OCI-LY7 (cell line): ENCODE measurements at regions of chr12 and their contacts with region 1.

Region 1: DNA sequence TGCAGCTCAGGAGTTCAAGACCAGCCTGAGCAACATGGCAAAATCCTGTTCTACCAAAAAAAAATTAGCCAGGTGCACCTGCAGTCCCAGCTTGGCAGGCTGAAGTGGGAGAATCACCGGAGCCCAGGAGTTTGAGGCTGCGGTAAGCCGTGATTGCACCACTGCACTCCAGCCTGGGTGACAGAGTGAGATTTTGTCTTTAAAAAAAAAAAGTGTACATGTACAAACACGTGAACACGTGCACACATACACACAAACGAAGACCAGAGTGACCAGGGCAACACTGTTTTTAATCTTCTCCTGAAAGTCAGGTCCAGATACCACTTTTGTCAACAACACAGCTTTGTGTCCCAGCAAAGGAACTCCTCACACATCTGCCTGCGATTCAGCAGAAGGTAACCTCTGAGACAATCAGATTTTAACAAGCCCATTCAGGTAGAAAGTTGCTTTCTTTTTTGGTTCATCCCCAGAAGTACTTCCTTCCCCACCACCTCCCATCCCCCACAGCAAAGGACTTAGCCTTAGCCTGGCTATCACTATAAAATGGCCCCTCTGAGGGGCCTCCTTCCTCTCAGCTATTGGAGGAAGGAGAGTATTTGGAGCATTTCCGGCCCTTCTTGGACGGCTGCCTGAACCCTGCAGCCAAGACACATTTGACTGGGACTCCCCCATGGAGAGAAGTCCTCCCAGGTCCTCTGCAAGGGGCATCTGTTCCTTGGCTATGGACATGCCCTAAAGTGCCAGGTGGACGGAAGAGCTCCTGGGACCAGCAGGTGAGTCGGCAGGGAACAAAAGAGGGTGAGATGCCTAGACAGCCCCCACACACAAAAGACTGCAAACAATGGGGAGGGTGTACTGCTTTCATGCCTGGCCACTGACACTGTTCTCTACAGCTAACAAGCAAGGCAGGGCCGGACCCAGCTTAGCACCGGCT is 9.8 kb downstream of the CTDSP2 start:
- DNase-seq: peak; percentile 83
- H3K4me3 ChIP-seq: peak overlapping the region; percentile 59
- H3K27ac ChIP-seq: peak overlapping the region; percentile 80
- H3K4me1 ChIP-seq: peaks cover 100% of the 10 kb centered on the region
- CTCF ChIP-seq: no peak

Region 2: GRCh38 chr12:57803319-57803893 is 33.3 kb before region 1 on chr12:
- CTCF ChIA-PET with region 1: no interaction called
- POLR2A ChIA-PET with region 1: no interaction called
- intact Hi-C with region 1: loop called (anchors 1 kb)
- DNase-seq: peak; percentile 43
- H3K4me3 ChIP-seq: no peak overlapping the region
- H3K27ac ChIP-seq: no peak overlapping the region
- H3K4me1 ChIP-seq: no peaks in the 10 kb centered on the region
- CTCF ChIP-seq: peak; percentile 89

Region 3: GRCh38 chr12:57846577-57847319 is 10.0 kb after region 1 on chr12 and contains the start of gene CTDSP2:
- CTCF ChIA-PET with region 1: interaction called, 13 read pairs
- POLR2A ChIA-PET with region 1: interaction called, 15 read pairs
- intact Hi-C with region 1: loop called (anchors 1 kb)
- DNase-seq: peak; percentile 97
- H3K4me3 ChIP-seq: peak within 1 kb of the TSS; percentile 96
- H3K27ac ChIP-seq: peak within 1 kb of the TSS; percentile 70
- H3K4me1 ChIP-seq: peaks cover 45% of the 10 kb centered on the region
- CTCF ChIP-seq: no peak
- total RNA-seq, gene CTDSP2: 38.8 and 44.2 TPM in 2 replicates